Adrenal gland (tissue), 19 donors: ENCODE measurements at regions of chr2 and their contacts with region 1.

Region 1: DNA sequence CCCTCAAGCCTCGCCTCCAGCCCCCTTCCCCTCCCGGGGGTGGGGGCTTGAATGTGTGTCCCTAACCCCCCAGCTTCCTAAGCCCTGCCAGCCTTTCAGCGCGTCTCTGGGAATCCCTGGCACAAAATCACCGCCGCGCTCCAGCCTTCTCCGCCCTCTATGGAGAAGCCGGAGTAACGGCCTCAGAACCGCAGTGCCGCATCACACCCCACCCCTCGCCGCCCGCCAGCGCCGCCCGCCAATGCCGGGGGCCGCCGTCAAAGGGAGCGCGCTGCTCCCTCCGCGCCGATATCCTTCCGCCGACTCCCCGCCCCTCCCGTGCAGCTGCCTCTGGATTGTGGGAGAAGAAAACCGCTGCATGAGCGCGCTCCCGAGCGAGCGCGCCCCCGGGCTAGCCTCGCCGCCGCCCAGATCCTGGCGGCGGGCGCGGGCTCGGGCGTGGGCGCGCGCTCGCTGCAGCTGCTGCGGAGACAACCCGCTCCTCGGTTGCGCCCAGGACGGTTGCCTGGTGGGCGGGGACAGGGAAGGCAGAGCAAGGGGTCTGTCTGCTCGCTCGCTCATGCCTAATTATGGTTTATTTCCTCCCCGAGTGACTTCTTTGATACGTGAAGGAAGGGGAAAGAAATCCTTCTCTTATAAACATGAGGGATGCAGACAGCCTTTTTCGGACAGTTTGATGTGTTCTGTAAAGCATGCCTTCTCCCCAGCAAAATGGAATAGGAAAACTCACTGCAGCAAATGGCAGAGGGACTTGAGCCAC is at the start of gene CCDC88A:
- DNase-seq: peak; percentile 95 to 98 (median 97)
- H3K4me3 ChIP-seq: peak within 1 kb of the TSS; percentile 43 to 93 (median 87)
- H3K27ac ChIP-seq: peak within 1 kb of the TSS; percentile 59 to 95 (median 87)
- H3K4me1 ChIP-seq: peaks cover 5 to 35% of the 10 kb centered on the region in 2 donors
- H3K27me3 ChIP-seq: no peaks in the 10 kb centered on the region
- CTCF ChIP-seq: peak in 4 of 6 experiments; percentile 24 to 55 (median 39)
- POLR2A ChIP-seq: peak; percentile 92 to 96
- total RNA-seq, gene CCDC88A: 18.5 to 101 (median 46.9) TPM

Region 2: DNA sequence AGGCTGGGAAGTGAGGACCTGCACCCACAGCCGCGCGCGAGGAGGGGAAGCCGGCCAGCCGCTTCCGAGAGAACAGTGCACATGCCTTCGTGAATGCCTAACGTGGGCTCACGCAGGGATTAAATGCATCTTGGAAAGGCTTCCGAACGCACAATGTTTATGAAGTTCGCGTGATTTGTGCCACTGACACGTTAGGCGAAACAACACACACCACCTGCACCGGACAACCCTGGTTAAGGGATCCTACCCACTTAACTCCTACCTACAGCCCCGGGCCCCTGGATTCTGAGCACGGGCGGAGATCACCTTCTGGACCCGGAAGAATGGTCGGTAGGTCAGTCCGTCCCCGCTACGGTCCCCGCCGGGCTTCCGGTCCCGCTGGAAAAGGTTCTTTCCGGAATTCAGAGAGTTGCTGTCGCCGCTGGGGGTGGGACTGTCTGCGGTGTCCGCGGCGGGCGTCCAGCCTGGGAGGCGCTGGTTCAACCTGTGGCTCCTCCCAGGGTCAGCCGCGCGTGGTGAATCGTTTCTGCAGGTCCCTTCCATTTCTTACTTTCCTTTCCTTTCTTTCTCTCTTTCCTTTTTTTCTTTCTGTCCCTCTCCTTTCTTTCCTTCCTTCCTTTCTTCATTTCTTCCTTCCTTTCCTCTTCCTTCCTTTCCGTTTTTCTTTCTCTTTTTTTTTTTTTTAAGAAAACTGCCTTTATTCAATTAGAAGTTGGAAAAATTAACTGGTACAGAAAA is 150.8 kb before region 1 on chr2 and contains the start of gene MTIF2:
- intact Hi-C with region 1: loop called in 1 of 2 experiments (anchors 10 kb)
- DNase-seq: peak; percentile 96 to 98 (median 97)
- H3K4me3 ChIP-seq: peak within 1 kb of the TSS; percentile 7 to 82 (median 70)
- H3K27ac ChIP-seq: peak within 1 kb of the TSS in 4 of 5 donors; percentile 60 to 94 (median 88)
- H3K4me1 ChIP-seq: peaks cover 7 to 17% of the 10 kb centered on the region in 2 donors
- H3K27me3 ChIP-seq: no peaks in the 10 kb centered on the region
- CTCF ChIP-seq: peak in 4 of 6 experiments; percentile 8 to 40 (median 29)
- POLR2A ChIP-seq: peak in 1 of 2 donors; percentile 60
- total RNA-seq, gene MTIF2: 18.2 to 47.4 (median 29.1) TPM